Heart left ventricle (tissue), 16 donors: ENCODE measurements at regions of chr13 and their contacts with region 1.

Region 1: GRCh38 chr13:108227651-108228272 is 9.6 kb downstream of the ABHD13 start:
- DNase-seq: no peak
- ATAC-seq: no peak
- H3K4me3 ChIP-seq: no peak overlapping the region
- H3K27ac ChIP-seq: no peak overlapping the region
- H3K4me1 ChIP-seq: peaks cover 4 to 49% (median 30%) of the 10 kb centered on the region in 12 donors
- H3K27me3 ChIP-seq: no peaks in the 10 kb centered on the region
- CTCF ChIP-seq: peak; percentile 67 to 90 (median 83)
- POLR2A ChIP-seq: no peak

Region 2: DNA sequence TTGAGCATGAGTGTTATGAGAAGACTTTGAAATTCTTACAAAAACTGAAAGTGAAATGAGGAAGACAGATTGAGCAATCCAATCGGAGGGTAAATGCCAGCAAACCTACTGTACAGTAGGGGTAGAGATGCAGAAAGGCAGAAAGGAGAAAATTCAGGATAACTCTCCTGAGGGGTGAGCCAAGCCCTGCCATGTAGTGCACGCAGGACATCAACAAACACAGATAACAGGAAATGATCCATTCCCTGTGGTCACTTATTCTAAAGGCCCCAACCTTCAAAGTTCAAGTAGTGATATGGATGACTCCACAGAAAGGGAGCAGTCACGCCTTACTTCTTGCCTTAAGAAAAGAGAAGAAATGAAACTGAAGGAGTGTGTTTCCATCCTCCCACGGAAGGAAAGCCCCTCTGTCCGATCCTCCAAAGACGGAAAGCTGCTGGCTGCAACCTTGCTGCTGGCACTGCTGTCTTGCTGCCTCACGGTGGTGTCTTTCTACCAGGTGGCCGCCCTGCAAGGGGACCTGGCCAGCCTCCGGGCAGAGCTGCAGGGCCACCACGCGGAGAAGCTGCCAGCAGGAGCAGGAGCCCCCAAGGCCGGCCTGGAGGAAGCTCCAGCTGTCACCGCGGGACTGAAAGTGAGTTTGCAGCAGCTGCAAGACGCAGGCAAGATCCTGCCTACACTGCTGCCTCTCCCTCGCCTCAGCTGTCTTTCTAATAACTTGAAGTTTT is 42.0 kb after region 1 on chr13 and contains the start of gene TNFSF13B:
- intact Hi-C with region 1: loop called in 1 of 10 experiments (anchors 5 kb)
- DNase-seq: peak; percentile 36 to 83 (median 48)
- ATAC-seq: peak; percentile 39 to 78 (median 75)
- H3K4me3 ChIP-seq: peak within 1 kb of the TSS in 11 of 12 donors; percentile 20 to 64 (median 50)
- H3K27ac ChIP-seq: peak within 1 kb of the TSS in 11 of 12 donors; percentile 11 to 94 (median 55)
- H3K4me1 ChIP-seq: peaks cover 0 to 41% (median 2%) of the 10 kb centered on the region in 12 donors
- H3K27me3 ChIP-seq: no peaks in the 10 kb centered on the region
- CTCF ChIP-seq: no peak
- POLR2A ChIP-seq: no peak
- total RNA-seq, gene TNFSF13B: 0.81 to 26.9 (median 1.0) TPM

Region 3: DNA sequence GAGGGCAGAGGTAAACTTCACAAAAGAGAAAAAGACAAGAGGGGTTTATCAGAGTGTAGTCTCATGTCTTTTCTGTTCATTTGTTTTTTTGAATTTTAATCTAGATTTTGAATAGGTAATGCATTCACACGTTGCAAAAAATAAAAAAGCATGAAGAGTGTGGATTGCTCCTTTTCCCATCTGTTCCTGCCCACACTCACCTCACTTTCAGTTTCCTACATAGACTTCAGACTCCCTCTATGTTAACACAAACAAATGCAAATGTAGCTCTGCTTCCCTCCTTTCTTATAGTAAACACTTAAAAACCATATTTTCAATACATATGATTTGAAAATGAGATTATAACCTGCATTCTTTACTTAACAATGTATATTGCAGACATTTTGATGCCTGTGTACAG is 62.1 kb after region 1 on chr13:
- intact Hi-C with region 1: loop called in 1 of 10 experiments (anchors 10 kb)
- DNase-seq: no peak
- ATAC-seq: no peak
- H3K4me3 ChIP-seq: no peak overlapping the region
- H3K27ac ChIP-seq: no peak overlapping the region
- H3K4me1 ChIP-seq: no peaks in the 10 kb centered on the region
- H3K27me3 ChIP-seq: no peaks in the 10 kb centered on the region
- CTCF ChIP-seq: no peak
- POLR2A ChIP-seq: no peak

Region 4: DNA sequence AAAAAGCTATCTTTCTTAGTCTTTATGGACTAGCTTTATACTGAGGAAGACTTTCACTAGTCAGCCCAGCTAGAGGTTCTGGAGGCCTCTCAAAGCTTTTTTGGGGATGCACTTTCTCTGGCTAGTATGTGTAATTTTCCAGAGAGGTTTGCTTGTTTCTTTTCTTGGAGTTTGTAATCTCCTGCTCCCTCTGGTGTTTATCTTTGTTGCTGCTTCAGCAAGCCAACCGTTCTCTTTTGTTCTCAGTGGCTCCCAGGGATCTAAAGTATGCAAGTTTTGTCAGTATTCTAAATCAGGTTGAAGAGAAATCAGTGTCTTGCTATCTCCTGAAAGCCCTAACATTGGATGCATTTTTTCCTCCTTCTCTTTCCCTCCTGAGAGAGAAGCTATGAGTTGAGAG is 280.5 kb after region 1 on chr13:
- intact Hi-C with region 1: loop called in 2 of 10 experiments (anchors 5 to 10 kb)
- DNase-seq: no peak
- ATAC-seq: no peak
- H3K4me3 ChIP-seq: no peak overlapping the region
- H3K27ac ChIP-seq: no peak overlapping the region
- H3K4me1 ChIP-seq: no peaks in the 10 kb centered on the region
- H3K27me3 ChIP-seq: no peaks in the 10 kb centered on the region
- CTCF ChIP-seq: peak in 10 of 12 donors; percentile 13 to 48 (median 26)
- POLR2A ChIP-seq: no peak